ENCODE measurements at regions of chr20 and their contacts with region 1.

Region 1: GRCh38 chr20:17569616-17570346 is at the start of gene DSTN:
- DNase-seq: peak; percentile 95
- H3K4me3 ChIP-seq: peak within 1 kb of the TSS; percentile 86
- H3K27ac ChIP-seq: peak within 1 kb of the TSS; percentile 89
- H3K4me1 ChIP-seq: peaks cover 11% of the 10 kb centered on the region
- H3K27me3 ChIP-seq: no peaks in the 10 kb centered on the region
- CTCF ChIP-seq: no peak
- total RNA-seq, gene DSTN: 148 and 159 TPM in 2 replicates

Region 2: GRCh38 chr20:17662333-17663039 is 92.7 kb after region 1 on chr20:
- CTCF ChIA-PET with region 1: no interaction called
- POLR2A ChIA-PET with region 1: no interaction called
- intact Hi-C with region 1: loop called (anchors 5 kb)
- DNase-seq: peak; percentile 71
- H3K4me3 ChIP-seq: no peak overlapping the region
- H3K27ac ChIP-seq: peak overlapping the region; percentile 58
- H3K4me1 ChIP-seq: peaks cover 54% of the 10 kb centered on the region
- H3K27me3 ChIP-seq: no peaks in the 10 kb centered on the region
- CTCF ChIP-seq: no peak